Calu3 (cell line): ENCODE measurements at regions of chr1 and their contacts with region 1.

Region 1: DNA sequence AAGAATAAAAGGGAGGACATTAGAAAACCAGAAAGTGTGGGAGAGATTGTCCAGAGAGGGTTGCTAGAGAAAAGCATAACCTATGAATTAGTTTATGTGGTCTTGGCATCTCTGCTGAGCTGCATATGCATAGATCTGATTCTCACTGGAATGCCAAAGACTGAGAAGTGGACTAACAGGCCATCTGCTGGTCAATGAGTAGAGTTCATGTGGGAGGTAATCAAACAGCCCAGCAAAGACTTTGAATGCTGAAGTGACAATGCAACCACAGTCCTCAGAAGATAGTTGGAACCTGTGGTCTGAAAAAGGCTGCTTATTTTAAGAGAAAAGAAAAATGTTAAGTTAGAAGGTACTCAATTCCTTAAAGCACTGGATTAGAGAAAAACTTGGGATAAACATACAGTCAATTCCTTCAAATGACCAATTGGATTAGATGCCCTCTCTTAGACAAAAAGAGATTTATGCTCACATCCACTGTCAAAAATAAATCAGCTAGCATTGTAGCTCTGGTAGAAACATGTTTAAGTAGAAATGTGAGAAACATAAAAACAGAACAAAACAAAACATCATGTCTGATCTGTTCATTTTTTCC is 382.8 kb downstream of the AMY1C start:
- DNase-seq: peak; percentile 8
- H3K4me3 Mint-ChIP-seq: no peak overlapping the region
- H3K27ac Mint-ChIP-seq: no peak overlapping the region
- H3K4me1 Mint-ChIP-seq: no peaks in the 10 kb centered on the region
- H3K27me3 Mint-ChIP-seq: no peaks in the 10 kb centered on the region
- CTCF ChIP-seq: no peak

Region 2: GRCh38 chr1:103525607-103526507 is 606.6 kb before region 1 on chr1 and contains the start of gene RNPC3:
- CTCF ChIA-PET with region 1: no interaction called
- intact Hi-C with region 1: no loop called
- DNase-seq: peak; percentile 69
- H3K4me3 Mint-ChIP-seq: peak within 1 kb of the TSS; percentile 88
- H3K27ac Mint-ChIP-seq: peak within 1 kb of the TSS; percentile 96
- H3K4me1 Mint-ChIP-seq: peaks cover 27% of the 10 kb centered on the region
- H3K27me3 Mint-ChIP-seq: no peaks in the 10 kb centered on the region
- CTCF ChIP-seq: no peak
- total RNA-seq, gene RNPC3: 15.7 and 21.0 TPM in 2 replicates

Region 3: DNA sequence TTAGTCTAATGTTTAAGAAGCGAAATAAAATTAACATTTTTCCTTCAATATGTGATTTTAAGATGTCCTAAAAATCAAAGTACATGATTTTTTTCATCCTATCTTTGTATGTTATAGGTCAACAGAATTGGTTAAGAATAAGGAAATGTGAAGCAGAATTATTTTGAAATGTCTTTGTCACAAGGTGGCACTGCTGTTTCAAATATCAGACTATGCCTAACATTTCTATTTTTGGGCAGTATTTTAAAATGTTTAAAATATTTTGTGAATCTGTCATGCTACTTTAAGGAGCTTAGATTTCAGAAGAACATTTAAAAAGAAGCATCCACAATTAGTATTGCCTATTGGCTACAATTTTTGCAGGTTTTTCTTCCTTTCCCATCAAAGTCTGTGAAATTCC is 344.1 kb before region 1 on chr1:
- CTCF ChIA-PET with region 1: no interaction called
- intact Hi-C with region 1: loop called (anchors 5 kb)
- DNase-seq: peak; percentile 1
- H3K4me3 Mint-ChIP-seq: no peak overlapping the region
- H3K27ac Mint-ChIP-seq: no peak overlapping the region
- H3K4me1 Mint-ChIP-seq: no peaks in the 10 kb centered on the region
- H3K27me3 Mint-ChIP-seq: no peaks in the 10 kb centered on the region
- CTCF ChIP-seq: no peak

Region 4: GRCh38 chr1:104072915-104073371 is 59.5 kb before region 1 on chr1:
- CTCF ChIA-PET with region 1: no interaction called
- intact Hi-C with region 1: no loop called
- DNase-seq: no peak
- H3K4me3 Mint-ChIP-seq: no peak overlapping the region
- H3K27ac Mint-ChIP-seq: no peak overlapping the region
- H3K4me1 Mint-ChIP-seq: no peaks in the 10 kb centered on the region
- H3K27me3 Mint-ChIP-seq: no peaks in the 10 kb centered on the region
- CTCF ChIP-seq: no peak

Region 5: GRCh38 chr1:104248385-104248784 is 115.9 kb after region 1 on chr1:
- CTCF ChIA-PET with region 1: no interaction called
- intact Hi-C with region 1: no loop called
- DNase-seq: no peak
- H3K4me3 Mint-ChIP-seq: no peak overlapping the region
- H3K27ac Mint-ChIP-seq: no peak overlapping the region
- H3K4me1 Mint-ChIP-seq: no peaks in the 10 kb centered on the region
- H3K27me3 Mint-ChIP-seq: no peaks in the 10 kb centered on the region
- CTCF ChIP-seq: no peak